Heart right ventricle (tissue), 16 donors: ENCODE measurements at regions of chr3 and their contacts with region 1.

Region 1: GRCh38 chr3:192566706-192567290 is 160.5 kb downstream of the FGF12 start:
- DNase-seq: peak; percentile 38 to 81
- ATAC-seq: peak in 7 of 8 donors; percentile 59 to 80 (median 71)
- H3K4me3 ChIP-seq: peak overlapping the region in 1 of 10 donors; percentile 19
- H3K27ac ChIP-seq: peak overlapping the region in 4 of 10 donors; percentile 14 to 57 (median 18)
- H3K4me1 ChIP-seq: peaks cover 0 to 21% (median 12%) of the 10 kb centered on the region in 9 donors
- H3K27me3 ChIP-seq: peaks cover 0 to 9% (median 0%) of the 10 kb centered on the region in 7 donors
- CTCF ChIP-seq: peak; percentile 70 to 90 (median 82)

Region 2: GRCh38 chr3:192467230-192468140 is 99.3 kb before region 1 on chr3:
- intact Hi-C with region 1: loop called in 6 of 10 experiments (anchors 5 to 10 kb)
- DNase-seq: peak; percentile 19 to 47
- ATAC-seq: peak; percentile 58 to 83 (median 78)
- H3K4me3 ChIP-seq: no peak overlapping the region
- H3K27ac ChIP-seq: peak overlapping the region in 1 of 10 donors; percentile 26
- H3K4me1 ChIP-seq: peaks cover 0 to 9% (median 5%) of the 10 kb centered on the region in 9 donors
- H3K27me3 ChIP-seq: peaks cover 0 to 11% (median 0%) of the 10 kb centered on the region in 7 donors
- CTCF ChIP-seq: peak; percentile 81 to 96 (median 91)

Region 3: DNA sequence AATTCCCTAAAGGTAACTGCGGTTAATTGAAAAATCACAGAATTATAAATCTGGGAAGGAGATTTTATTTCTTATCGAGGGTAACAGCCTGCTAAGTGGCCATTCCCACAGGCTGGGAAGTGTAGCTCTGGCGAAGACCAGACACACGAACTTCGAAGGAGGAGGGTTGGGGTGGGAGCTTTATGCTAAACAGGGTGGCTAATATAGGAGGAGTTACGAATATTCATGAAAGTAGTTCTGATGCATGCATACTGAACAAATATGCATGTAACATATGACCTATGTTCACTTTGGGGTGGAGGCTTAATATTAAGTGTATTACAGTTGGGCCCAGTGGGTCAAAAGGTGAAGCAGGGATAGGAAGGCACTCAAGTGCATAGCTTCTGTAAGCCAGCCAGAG is 61.1 kb before region 1 on chr3:
- intact Hi-C with region 1: no loop called
- DNase-seq: no peak
- ATAC-seq: peak in 1 of 8 donors; percentile 24
- H3K4me3 ChIP-seq: no peak overlapping the region
- H3K27ac ChIP-seq: no peak overlapping the region
- H3K4me1 ChIP-seq: peaks cover 0 to 17% (median 0%) of the 10 kb centered on the region in 9 donors
- H3K27me3 ChIP-seq: no peaks in the 10 kb centered on the region
- CTCF ChIP-seq: no peak

Region 4: DNA sequence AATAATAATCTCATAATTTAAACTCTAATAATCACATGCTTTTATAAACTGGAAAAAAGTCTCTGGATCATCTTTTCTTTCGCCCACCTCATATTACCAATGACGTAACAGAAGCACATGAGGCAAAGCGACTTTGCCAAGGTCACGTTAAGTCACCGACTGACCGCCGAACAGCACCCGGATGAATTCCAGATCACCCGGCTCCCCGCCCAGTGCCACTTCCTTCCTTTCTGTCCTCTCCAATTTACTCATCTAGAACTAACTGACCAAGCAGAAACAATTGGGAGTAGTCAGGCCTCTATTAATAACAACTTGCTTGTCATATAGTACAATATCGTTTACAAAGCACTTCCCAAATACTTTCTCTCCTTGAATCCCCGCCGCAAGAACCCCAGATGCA is 139.5 kb after region 1 on chr3:
- intact Hi-C with region 1: loop called in 2 of 10 experiments (anchors 5 to 10 kb)
- DNase-seq: peak; percentile 55 to 62
- ATAC-seq: peak; percentile 72 to 97 (median 89)
- H3K4me3 ChIP-seq: no peak overlapping the region
- H3K27ac ChIP-seq: peak overlapping the region; percentile 17 to 77 (median 71)
- H3K4me1 ChIP-seq: peaks cover 0 to 6% (median 0%) of the 10 kb centered on the region in 9 donors
- H3K27me3 ChIP-seq: no peaks in the 10 kb centered on the region
- CTCF ChIP-seq: no peak

Region 5: DNA sequence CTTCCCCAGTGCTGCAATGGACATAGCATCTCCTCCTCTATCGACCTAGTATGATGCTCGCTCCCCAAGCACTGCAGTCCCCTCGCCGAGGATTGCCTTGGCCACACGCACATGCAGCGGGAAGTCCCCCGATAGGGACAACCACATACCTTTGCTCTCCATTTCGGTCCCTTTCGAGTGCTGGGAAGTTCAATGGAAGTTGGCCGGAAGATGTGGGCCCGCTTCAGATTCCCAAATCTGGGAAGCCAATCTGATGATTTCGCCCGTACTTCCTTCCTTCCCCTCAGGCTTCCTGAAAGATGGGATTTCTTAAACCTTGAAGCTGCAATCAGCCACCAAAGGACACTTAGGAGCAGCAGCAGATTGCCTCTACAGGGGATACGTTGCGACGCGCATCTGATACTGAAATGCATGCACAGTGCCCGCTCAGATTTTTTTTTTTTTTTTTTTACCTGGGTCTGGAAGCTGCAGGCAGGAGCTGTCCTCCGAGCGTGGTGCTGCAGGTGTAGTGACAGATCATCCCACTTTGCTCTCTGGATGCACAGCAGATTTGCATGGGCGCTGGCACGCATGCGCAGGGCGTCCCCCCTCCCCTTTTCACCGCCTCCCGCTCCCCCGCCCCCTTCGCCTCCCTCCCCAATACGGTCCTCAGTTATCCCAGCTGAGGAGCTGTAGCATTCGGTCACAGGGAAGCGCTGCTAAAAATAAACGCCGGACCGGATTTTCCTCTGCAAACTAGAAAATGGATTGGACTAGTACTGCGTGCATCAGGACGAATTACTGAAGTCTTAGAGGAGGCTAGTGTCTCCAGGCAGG is 160.4 kb after region 1 on chr3 and contains the start of gene FGF12:
- intact Hi-C with region 1: loop called in 4 of 10 experiments (anchors 2 to 10 kb)
- DNase-seq: peak; percentile 86 to 87
- ATAC-seq: peak; percentile 90 to 96 (median 94)
- H3K4me3 ChIP-seq: peak within 1 kb of the TSS; percentile 35 to 64 (median 53)
- H3K27ac ChIP-seq: peak within 1 kb of the TSS; percentile 44 to 82 (median 68)
- H3K4me1 ChIP-seq: peaks cover 0 to 22% (median 4%) of the 10 kb centered on the region in 9 donors
- H3K27me3 ChIP-seq: no peaks in the 10 kb centered on the region
- CTCF ChIP-seq: no peak
- total RNA-seq, gene FGF12: 219 to 504 (median 313) TPM

Region 6: GRCh38 chr3:192802957-192803899 is 236.4 kb after region 1 on chr3:
- intact Hi-C with region 1: loop called (anchors 1 to 10 kb)
- DNase-seq: no peak
- ATAC-seq: peak in 6 of 8 donors; percentile 16 to 72 (median 56)
- H3K4me3 ChIP-seq: no peak overlapping the region
- H3K27ac ChIP-seq: no peak overlapping the region
- H3K4me1 ChIP-seq: peaks cover 0 to 8% (median 0%) of the 10 kb centered on the region in 9 donors
- H3K27me3 ChIP-seq: no peaks in the 10 kb centered on the region
- CTCF ChIP-seq: peak in 8 of 9 donors; percentile 37 to 76 (median 62)

Region 7: GRCh38 chr3:193564012-193564411 is 997.2 kb after region 1 on chr3:
- intact Hi-C with region 1: loop called in 1 of 10 experiments (anchors 10 kb)
- DNase-seq: no peak
- ATAC-seq: peak in 2 of 8 donors; percentile 56 to 64
- H3K4me3 ChIP-seq: no peak overlapping the region
- H3K27ac ChIP-seq: no peak overlapping the region
- H3K4me1 ChIP-seq: peaks cover 0 to 7% (median 0%) of the 10 kb centered on the region in 9 donors
- H3K27me3 ChIP-seq: peaks cover 0 to 3% (median 0%) of the 10 kb centered on the region in 7 donors
- CTCF ChIP-seq: peak in 4 of 9 donors; percentile 10 to 35 (median 26)